ENCODE measurements at regions of chr3 and their contacts with region 1.

Region 1: GRCh38 chr3:194671900-194672808 is at the start of gene LSG1:
- DNase-seq: peak; percentile 93
- ATAC-seq: peak; percentile 93
- H3K4me3 Mint-ChIP-seq: peak within 1 kb of the TSS; percentile 89
- H3K27ac Mint-ChIP-seq: peak within 1 kb of the TSS; percentile 95
- H3K4me1 Mint-ChIP-seq: peaks cover 43% of the 10 kb centered on the region
- H3K27me3 Mint-ChIP-seq: no peaks in the 10 kb centered on the region
- total RNA-seq, gene LSG1: 42.8 to 58.7 TPM

Region 2: GRCh38 chr3:194632809-194633348 is 39.3 kb before region 1 on chr3:
- CTCF ChIA-PET with region 1: interaction called, 15 read pairs
- DNase-seq: peak; percentile 48
- ATAC-seq: peak; percentile 74
- H3K4me3 Mint-ChIP-seq: peak overlapping the region; percentile 83
- H3K27ac Mint-ChIP-seq: peak overlapping the region; percentile 73
- H3K4me1 Mint-ChIP-seq: peaks cover 15% of the 10 kb centered on the region
- H3K27me3 Mint-ChIP-seq: no peaks in the 10 kb centered on the region

Region 3: DNA sequence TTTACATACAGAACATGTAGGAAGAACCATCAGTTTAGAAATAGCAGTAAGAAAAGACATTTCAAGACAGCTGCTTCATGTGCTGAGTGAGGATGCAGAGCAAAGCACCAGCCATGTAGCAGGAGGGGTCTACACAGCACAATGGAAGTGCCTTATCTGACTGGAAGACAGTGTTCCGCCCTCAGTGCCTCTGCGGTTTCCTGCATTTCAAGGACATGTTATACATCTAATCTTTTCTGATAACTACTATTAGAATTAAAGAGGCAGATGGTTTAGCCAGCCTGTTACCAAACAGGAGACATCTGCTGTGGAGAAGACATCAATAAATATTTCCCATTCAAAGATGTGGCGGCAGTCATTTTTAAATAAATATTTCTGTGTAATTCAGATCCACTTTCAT is 10.8 kb before region 1 on chr3:
- CTCF ChIA-PET with region 1: interaction called, 30 read pairs
- DNase-seq: no peak
- ATAC-seq: no peak
- H3K4me3 Mint-ChIP-seq: no peak overlapping the region
- H3K27ac Mint-ChIP-seq: no peak overlapping the region
- H3K4me1 Mint-ChIP-seq: peaks cover 15% of the 10 kb centered on the region
- H3K27me3 Mint-ChIP-seq: no peaks in the 10 kb centered on the region

Region 4: GRCh38 chr3:194682694-194683310 is 10.6 kb after region 1 on chr3:
- CTCF ChIA-PET with region 1: interaction called, 98 read pairs
- DNase-seq: peak; percentile 84
- ATAC-seq: peak; percentile 61
- H3K4me3 Mint-ChIP-seq: no peak overlapping the region
- H3K27ac Mint-ChIP-seq: no peak overlapping the region
- H3K4me1 Mint-ChIP-seq: peaks cover 47% of the 10 kb centered on the region
- H3K27me3 Mint-ChIP-seq: peaks cover 37% of the 10 kb centered on the region

Region 5: DNA sequence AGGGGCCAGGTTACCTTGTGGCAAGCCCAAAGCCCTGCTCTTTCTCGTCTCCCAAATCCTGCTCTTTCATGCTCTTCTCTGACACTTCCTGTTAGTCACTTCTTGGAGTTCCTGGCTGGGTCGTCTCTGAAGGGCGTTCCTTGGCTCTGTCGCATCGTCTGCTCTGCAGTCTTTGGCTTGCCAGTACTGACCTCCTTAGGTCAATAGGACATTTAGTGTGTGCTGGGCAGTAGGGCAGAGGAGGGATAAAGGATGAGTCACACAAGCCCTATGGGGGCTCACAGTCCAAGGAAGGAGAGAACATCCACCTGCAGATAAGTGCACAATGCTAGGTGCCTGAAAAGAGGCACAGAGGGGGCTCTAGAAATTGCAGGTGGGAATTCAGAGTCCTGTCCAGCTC is 101.1 kb after region 1 on chr3:
- CTCF ChIA-PET with region 1: no interaction called
- DNase-seq: no peak
- ATAC-seq: no peak
- H3K4me3 Mint-ChIP-seq: no peak overlapping the region
- H3K27ac Mint-ChIP-seq: no peak overlapping the region
- H3K4me1 Mint-ChIP-seq: peaks cover 14% of the 10 kb centered on the region
- H3K27me3 Mint-ChIP-seq: peaks cover 32% of the 10 kb centered on the region

Region 6: GRCh38 chr3:195106418-195106906 is 434.3 kb after region 1 on chr3:
- CTCF ChIA-PET with region 1: interaction called, 10 read pairs
- DNase-seq: peak; percentile 65
- ATAC-seq: peak; percentile 90
- H3K4me3 Mint-ChIP-seq: no peak overlapping the region
- H3K27ac Mint-ChIP-seq: no peak overlapping the region
- H3K4me1 Mint-ChIP-seq: peaks cover 8% of the 10 kb centered on the region
- H3K27me3 Mint-ChIP-seq: no peaks in the 10 kb centered on the region

Region 7: DNA sequence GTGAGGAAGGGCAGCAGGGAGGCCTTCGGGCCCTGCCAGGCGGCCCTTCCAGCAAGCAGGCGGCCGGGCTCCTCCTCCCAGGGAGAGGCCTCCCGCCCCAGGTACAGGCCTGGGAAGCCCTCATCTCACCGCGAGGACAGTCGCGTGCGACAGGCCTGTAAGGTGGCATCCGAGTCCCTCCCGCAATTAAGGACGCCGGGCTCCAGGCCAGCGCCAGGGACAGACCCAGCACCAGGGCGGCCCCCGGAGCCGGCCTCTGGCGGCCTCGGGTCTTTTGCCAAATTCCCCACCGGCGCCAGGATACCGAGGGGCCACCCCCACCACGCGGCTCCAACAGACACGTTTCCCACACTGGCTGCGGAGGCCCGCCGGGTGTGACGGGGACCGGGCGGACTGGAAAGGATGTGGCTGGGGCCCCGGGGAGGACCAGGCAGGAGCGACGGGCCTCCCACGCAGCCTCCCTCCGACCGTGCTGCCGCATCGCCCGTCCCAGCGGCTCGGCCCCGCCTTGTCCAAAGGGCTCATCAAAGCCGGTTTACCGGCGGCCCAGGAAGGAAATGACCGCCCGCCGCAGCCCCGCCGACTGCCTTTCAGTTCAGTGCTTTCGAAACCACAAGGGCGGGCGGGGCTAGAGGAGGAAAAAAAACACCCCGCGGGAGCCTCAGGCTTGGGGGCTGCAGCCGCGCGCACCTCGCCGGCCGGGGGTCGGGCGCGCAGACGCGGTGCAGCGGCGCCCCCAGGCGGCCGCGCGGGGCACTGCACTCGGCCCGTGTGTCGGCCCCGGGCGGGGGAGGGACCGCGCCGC is 587.5 kb after region 1 on chr3:
- CTCF ChIA-PET with region 1: interaction called, 15 read pairs
- DNase-seq: peak; percentile 93
- ATAC-seq: peak; percentile 83
- H3K4me3 Mint-ChIP-seq: no peak overlapping the region
- H3K27ac Mint-ChIP-seq: peak overlapping the region; percentile 22
- H3K4me1 Mint-ChIP-seq: peaks cover 16% of the 10 kb centered on the region
- H3K27me3 Mint-ChIP-seq: no peaks in the 10 kb centered on the region

Measured in activated CD8-positive, alpha-beta memory T cell treated with anti-CD3 and anti-CD28 coated beads, Interleukin-2, amount 10 ng/mL, durations not matched to agents 7 days and 5 days (primary cell).